ENCODE measurements at regions of chr12 and their contacts with region 1.

Region 1: GRCh38 chr12:90978117-90978770 is 23.3 kb upstream of the CCER1 start:
- DNase-seq: no peak
- H3K4me3 ChIP-seq: no peak overlapping the region
- H3K27ac ChIP-seq: peak overlapping the region in 2 of 4 donors; percentile 1 to 36
- H3K4me1 ChIP-seq: no peaks in the 10 kb centered on the region
- H3K27me3 ChIP-seq: no peaks in the 10 kb centered on the region
- CTCF ChIP-seq: peak in 4 of 6 experiments; percentile 55 to 71 (median 62)
- POLR2A ChIP-seq: no peak

Region 2: GRCh38 chr12:91355150-91356006 is 377.1 kb after region 1 on chr12:
- intact Hi-C with region 1: loop called (anchors 10 kb)
- DNase-seq: no peak
- H3K4me3 ChIP-seq: no peak overlapping the region
- H3K27ac ChIP-seq: no peak overlapping the region
- H3K4me1 ChIP-seq: peaks cover 0 to 12% (median 0%) of the 10 kb centered on the region in 3 donors
- H3K27me3 ChIP-seq: no peaks in the 10 kb centered on the region
- CTCF ChIP-seq: peak in 5 of 6 experiments; percentile 73 to 85 (median 82)
- POLR2A ChIP-seq: no peak